ENCODE measurements at regions of chr6 and their contacts with region 1.

Region 1: DNA sequence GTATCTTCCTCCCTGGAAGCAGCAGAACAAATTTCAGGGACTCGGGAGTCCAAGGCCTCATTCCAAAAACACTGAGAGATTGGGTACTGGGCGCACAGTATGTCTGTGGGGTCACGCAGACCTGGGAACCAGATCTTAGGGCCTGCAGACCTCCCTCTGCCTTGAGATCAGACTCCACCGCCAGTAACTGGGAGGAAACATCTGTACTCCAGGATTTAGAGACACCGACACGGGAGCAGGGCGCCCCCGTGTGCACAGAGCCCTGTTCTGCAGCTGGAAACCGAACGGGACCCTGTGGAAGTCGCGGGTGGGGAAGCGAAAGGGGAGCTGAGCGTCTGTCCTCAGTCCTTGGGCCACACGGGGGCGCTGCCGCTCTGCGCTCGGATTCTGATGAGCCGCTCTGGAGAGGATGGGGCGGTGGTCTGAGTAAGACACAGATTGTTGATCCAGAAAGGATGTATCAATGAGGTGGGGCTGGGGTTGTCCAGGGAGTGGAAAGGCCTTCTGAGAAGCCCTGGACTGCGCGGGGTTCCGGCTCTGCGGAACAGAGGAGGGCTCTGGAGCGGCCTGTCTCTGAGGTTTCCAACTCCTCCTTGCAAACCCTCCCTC is 35.7 kb upstream of the HLA-E start:
- DNase-seq: peak; percentile 60
- ATAC-seq: peak; percentile 94
- H3K4me3 ChIP-seq: no peak overlapping the region
- H3K27ac ChIP-seq: no peak overlapping the region
- H3K4me1 ChIP-seq: no peaks in the 10 kb centered on the region
- H3K27me3 ChIP-seq: peaks cover 23% of the 10 kb centered on the region
- CTCF ChIP-seq: peak; percentile 98

Region 2: DNA sequence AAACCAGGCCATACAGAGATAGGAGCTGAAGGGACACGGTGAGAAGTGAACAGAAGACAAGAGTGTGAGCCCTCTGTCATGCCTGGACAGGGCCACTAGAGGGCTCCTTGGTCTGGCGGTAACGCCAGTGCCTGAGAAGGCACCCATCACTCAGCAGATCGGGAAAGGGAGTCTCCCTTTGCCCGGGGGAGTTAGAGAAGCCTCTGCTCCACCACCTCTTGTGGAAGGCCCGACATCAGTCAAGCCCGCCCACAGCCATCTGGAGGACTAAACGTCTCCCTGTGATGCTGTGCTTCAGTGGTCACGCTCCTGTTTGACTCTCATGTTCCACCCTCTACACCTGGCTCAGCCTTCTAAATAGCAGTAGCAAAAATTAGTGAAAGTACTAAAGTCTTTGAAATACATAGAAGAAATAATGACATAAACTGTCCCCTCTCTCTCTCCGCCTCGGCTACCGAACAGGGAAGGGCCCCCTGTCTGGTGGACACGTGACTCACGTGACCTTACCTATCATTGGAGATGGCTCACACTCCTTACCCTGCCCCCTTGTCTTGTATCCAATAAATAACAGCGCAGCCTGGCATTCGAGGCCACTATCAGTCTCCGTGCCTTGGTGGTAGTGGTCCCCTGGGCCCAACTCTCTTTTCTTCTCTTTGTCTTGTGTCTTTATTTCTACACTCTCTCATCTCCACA is 42.0 kb before region 1 on chr6:
- CTCF ChIA-PET with region 1: no interaction called
- POLR2A ChIA-PET with region 1: interaction called, 3 read pairs
- in situ Hi-C with region 1: no loop called
- intact Hi-C with region 1: loop called (anchors 5 kb)
- DNase-seq: peak; percentile 35
- ATAC-seq: peak; percentile 89
- H3K4me3 ChIP-seq: no peak overlapping the region
- H3K27ac ChIP-seq: no peak overlapping the region
- H3K4me1 ChIP-seq: no peaks in the 10 kb centered on the region
- H3K27me3 ChIP-seq: peaks cover 7% of the 10 kb centered on the region
- CTCF ChIP-seq: peak; percentile 89

Measured in Panc1 (cell line).